ENCODE measurements at regions of chr3 and their contacts with region 1.

Region 1: GRCh38 chr3:169980055-169980454 is 13.4 kb downstream of the SEC62 start:
- H3K4me3 Mint-ChIP-seq: no peak overlapping the region
- H3K27ac Mint-ChIP-seq: peak overlapping the region; percentile 24
- H3K4me1 Mint-ChIP-seq: peaks cover 13% of the 10 kb centered on the region
- H3K27me3 Mint-ChIP-seq: no peaks in the 10 kb centered on the region

Region 2: DNA sequence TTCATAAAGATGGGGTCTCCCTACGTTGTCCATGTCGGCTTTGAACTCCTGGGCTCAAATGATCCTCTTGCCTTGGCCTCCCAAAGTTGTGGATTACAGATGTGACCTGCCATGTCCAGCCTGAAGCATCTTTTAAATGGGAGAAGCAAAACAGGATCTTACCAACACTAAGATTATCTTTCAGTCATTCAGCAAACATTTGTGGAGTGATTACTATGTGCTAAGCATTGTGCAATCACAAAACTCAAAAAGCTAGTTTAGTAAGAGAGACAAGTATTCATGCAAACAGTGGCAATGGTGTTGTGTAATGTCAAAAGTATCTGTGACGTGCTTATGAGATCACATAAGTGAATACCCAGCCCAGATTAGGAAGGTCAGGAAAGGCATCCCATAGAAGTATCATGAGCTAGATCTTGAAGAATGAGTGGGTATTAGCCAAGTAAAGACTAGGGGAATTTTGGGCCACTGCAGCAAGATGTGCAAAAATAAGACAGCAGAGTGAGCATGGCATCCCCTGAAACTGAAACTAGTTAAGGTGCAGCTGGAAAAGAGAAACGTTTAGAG is 18.6 kb after region 1 on chr3:
- intact Hi-C with region 1: no loop called
- H3K4me3 Mint-ChIP-seq: no peak overlapping the region
- H3K27ac Mint-ChIP-seq: no peak overlapping the region
- H3K4me1 Mint-ChIP-seq: peaks cover 22% of the 10 kb centered on the region
- H3K27me3 Mint-ChIP-seq: no peaks in the 10 kb centered on the region

Region 3: DNA sequence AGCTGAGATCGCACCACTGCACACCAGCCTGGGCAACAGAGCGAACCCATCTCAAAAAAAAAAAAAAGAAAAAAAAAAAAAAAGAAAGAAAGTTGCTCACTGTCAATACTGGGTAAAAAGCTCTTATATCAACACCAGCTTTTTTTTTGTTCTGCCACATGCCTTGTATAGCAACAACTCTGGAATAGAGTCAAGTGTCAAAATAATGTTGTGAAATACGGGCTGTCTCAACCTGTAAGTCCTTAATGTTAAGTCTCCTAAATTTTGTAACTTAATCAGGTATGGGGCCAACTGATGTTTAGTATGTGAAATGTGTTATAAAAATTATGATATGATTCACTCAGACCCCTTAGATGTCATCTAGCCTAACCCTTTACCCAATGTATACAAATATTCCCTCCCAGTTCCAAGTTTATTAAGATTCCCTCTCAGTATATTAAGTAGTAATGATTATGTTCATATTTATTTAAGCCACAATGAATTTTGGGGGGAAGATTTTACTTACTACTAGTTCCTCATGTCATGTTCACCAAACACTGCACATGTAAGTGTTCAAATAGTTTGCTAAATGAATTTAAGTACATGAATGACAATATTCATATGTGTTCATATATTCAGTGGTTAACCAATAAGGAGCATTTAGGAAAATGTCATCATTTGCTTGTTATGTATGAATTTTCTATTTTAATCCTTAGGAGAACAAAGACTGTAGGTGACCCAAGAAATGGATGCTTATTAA is 110.0 kb after region 1 on chr3:
- intact Hi-C with region 1: loop called (anchors 10 kb)
- H3K4me3 Mint-ChIP-seq: no peak overlapping the region
- H3K27ac Mint-ChIP-seq: no peak overlapping the region
- H3K4me1 Mint-ChIP-seq: no peaks in the 10 kb centered on the region
- H3K27me3 Mint-ChIP-seq: no peaks in the 10 kb centered on the region

Region 4: DNA sequence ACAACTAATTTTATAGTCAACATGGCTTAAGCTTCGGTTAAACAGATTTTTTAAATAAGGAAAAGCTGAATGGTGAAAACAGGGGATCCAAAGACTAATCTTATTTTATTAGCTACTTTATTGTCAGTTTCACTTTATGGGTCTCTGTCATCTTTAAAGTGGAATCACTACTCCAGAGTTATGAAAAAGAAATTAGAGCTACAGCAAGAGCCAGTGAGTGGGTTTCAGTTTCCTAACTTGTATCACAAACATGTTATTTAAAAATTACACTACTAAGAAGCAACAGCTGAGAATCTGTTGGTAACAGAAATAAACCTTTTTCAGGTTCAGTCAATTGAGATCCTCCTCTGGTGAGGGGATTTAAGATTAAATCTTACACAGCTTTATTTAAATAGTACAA is 191.5 kb after region 1 on chr3:
- intact Hi-C with region 1: loop called (anchors 10 kb)
- H3K4me3 Mint-ChIP-seq: no peak overlapping the region
- H3K27ac Mint-ChIP-seq: no peak overlapping the region
- H3K4me1 Mint-ChIP-seq: peaks cover 11% of the 10 kb centered on the region
- H3K27me3 Mint-ChIP-seq: no peaks in the 10 kb centered on the region